AG04450 (cell line): ENCODE measurements at regions of chr6 and their contacts with region 1.

Region 1: DNA sequence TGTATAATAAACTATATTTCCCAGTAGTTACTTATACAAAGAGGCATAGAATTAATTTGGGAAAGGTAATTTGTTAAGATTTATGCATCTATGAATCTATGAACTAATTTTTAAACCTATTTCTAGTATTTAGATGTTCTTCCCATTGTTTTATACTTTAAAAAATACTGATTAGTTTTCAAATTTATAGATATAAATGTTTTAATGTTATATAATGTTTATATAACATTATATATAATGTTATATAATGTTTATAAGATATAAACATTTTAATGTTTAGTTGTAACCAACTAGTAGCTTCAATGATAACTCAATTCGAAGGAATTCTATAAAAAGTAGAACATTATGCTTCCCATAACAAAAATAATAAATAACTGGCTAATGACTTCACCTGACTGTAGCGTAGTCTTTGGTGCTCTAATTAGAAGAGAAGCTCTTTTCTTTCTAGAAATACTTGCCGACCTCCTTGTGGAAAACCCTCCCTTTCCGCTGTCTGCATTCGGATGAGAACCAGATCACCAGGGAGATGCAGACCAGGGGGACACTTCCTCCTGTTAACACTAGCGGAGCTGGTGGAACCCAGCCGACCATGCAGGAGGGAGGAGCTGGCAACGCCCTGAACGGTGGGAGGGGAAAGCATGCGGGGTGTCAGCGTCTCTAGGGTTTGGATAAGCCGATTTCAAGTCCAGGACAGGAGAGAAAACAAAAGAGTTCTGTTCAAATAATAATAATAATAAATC is 158.4 kb downstream of the OR2B2 start:
- DNase-seq: peak; percentile 61
- H3K4me3 ChIP-seq: peak overlapping the region; percentile 61
- H3K27ac ChIP-seq: no peak overlapping the region
- H3K27me3 ChIP-seq: peaks cover 13% of the 10 kb centered on the region
- CTCF ChIP-seq: peak; percentile 26; the same call in 1 of the 2 replicates

Region 2: DNA sequence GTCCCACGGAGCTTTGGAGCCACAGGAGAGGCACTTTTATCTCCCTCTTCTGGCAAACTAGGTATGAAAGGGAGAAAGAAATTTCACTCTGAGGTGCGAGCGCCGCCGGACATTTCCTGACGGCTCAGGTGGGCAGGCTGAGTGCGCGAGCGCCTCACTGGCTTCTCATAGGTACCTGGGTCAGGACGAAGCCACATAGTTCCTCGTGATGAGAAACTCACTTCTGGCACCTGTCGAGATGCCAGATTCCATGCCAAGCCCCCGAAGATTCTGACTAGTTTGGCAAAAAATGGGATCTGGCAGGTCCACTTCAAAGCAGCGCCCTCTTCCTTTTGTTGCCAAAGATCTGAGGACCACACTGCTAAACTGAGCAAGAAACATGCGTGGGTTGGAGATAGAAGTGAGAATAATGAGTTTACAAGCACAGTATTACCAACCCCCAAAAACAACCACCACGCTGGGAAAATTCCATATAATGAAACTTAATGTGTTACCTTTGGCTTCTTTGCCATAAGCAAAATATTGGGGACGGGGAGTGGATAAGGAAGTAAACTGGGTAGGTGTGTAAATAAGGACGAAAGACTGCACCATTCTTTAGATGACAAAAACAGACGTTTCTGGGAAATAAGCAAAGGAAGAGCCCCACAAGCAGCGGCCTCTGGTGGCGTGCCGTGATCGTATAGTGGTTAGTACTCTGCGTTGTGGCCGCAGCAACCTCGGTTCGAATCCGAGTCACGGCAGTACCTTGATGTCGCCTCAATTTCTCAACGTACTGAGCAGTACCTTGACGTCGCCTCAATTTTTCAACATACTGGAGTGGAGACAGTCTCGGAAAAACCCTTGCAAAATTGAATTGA is 596.2 kb before region 1 on chr6:
- CTCF ChIA-PET with region 1: interaction called, 20 read pairs
- POLR2A ChIA-PET with region 1: interaction called, 3 read pairs
- DNase-seq: no peak
- H3K4me3 ChIP-seq: peak overlapping the region; percentile 62
- H3K27ac ChIP-seq: no peak overlapping the region
- H3K27me3 ChIP-seq: no peaks in the 10 kb centered on the region
- CTCF ChIP-seq: peak; percentile 62

Region 3: GRCh38 chr6:27495386-27496135 is 258.3 kb before region 1 on chr6:
- CTCF ChIA-PET with region 1: interaction called, 13 read pairs
- POLR2A ChIA-PET with region 1: no interaction called
- DNase-seq: no peak
- H3K4me3 ChIP-seq: peak overlapping the region; percentile 79
- H3K27ac ChIP-seq: peak overlapping the region; percentile 72
- H3K27me3 ChIP-seq: no peaks in the 10 kb centered on the region
- CTCF ChIP-seq: peak; percentile 9; the same call in 1 of the 2 replicates

Region 4: DNA sequence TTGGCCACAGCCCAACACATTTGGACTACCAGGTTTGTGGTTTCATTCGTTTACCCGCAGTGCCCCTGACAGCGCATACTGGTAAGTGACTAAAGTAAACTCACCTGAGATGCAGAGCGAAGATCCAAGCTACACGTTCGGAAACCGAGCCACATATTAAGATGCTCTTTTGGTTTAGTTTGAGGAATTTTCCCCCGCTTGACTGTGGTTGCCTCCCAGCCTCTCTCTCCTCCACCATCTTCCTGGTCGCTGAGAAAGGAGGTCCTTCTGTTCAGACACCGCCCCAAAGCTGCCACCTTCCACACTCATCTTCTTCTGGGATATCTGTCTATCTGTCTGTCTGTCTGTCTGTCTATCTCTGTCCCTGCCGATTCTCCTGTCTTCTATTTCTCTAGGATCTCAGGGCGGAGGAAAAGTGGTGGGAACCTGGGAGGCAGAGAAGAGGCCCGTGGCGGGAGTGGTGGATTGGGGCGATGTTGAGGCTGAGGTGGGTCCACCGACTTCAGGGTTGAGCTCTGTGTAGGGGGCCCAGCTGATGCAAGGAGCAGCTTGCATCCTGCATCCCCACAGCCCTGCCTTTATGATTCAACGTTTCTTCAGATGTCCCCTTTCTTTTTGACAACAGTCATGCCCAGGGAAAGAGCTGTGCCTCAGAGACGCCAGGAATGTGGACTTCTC is 84.1 kb before region 1 on chr6:
- CTCF ChIA-PET with region 1: interaction called, 12 read pairs
- POLR2A ChIA-PET with region 1: no interaction called
- DNase-seq: no peak
- H3K4me3 ChIP-seq: peak overlapping the region; percentile 23; the same call in 1 of the 2 replicates
- H3K27ac ChIP-seq: no peak overlapping the region
- H3K27me3 ChIP-seq: peaks cover 7% of the 10 kb centered on the region
- CTCF ChIP-seq: no peak

Region 5: GRCh38 chr6:27743818-27744217 is 10.0 kb before region 1 on chr6:
- CTCF ChIA-PET with region 1: interaction called, 20 read pairs
- POLR2A ChIA-PET with region 1: no interaction called
- DNase-seq: no peak
- H3K4me3 ChIP-seq: no peak overlapping the region
- H3K27ac ChIP-seq: no peak overlapping the region
- H3K27me3 ChIP-seq: peaks cover 5% of the 10 kb centered on the region
- CTCF ChIP-seq: no peak

Region 6: GRCh38 chr6:27795697-27796494 is 42.1 kb after region 1 on chr6:
- CTCF ChIA-PET with region 1: interaction called, 23 read pairs
- POLR2A ChIA-PET with region 1: no interaction called
- DNase-seq: peak; percentile 84
- H3K4me3 ChIP-seq: no peak overlapping the region
- H3K27ac ChIP-seq: no peak overlapping the region
- H3K27me3 ChIP-seq: no peaks in the 10 kb centered on the region
- CTCF ChIP-seq: peak; percentile 83

Region 7: GRCh38 chr6:27962506-27962905 is 208.7 kb after region 1 on chr6:
- CTCF ChIA-PET with region 1: no interaction called
- POLR2A ChIA-PET with region 1: no interaction called
- DNase-seq: no peak
- H3K4me3 ChIP-seq: no peak overlapping the region
- H3K27ac ChIP-seq: no peak overlapping the region
- H3K27me3 ChIP-seq: no peaks in the 10 kb centered on the region
- CTCF ChIP-seq: no peak